ENCODE measurements at regions of chr1 and their contacts with region 1.

Region 1: GRCh38 chr1:63442141-63442475 is 74.7 kb downstream of the ALG6 start:
- DNase-seq: no peak
- ATAC-seq: peak; percentile 26; the same call in 2 of the 3 replicates
- H3K4me3 ChIP-seq: no peak overlapping the region
- H3K27ac ChIP-seq: no peak overlapping the region
- H3K4me1 ChIP-seq: no peaks in the 10 kb centered on the region
- H3K27me3 ChIP-seq: no peaks in the 10 kb centered on the region
- CTCF ChIP-seq: no peak
- EP300 ChIP-seq: no peak
- POLR2A ChIP-seq: no peak
- RAD21 ChIP-seq: no peak

Region 2: DNA sequence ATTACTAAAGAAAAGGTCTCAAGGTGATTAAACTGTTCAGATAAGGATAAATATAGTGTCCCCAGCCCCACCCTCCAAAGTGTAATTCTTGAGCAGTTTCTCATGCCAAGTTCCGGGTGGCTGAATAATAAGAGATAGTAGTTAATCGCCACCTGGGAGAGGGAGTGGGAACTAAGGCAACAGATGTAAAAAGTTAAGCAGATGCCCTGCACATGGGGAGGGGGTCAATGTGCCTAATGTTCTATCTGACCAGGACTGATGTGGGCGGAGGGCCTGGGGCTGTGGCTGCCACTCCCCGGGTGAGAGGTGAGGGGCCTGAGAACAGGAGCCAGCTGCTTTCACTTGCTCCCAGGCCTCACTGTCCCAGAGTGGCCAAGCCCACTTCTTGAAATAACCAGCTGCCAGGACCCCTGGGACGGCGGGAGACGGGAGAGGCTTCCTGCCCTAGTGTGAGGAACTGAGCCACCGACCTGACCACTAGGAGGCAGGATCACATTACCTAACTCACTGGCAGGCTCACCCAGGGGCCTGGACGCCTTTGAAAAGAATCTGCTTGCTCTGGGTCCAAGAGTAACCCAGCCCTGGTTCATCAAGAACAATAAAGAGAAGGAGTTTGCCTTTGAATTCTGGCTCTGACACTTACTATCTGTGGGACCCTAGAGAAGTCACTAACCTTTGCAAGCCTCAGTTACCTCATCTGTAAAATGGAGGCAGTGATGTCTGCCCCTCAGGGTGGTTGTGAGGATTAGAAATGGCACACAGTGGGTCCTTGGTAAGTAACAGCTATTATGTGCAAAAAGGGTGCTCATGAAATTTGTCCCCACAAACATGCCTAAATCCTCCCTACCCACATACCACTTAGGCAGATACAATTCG is 479.0 kb before region 1 on chr1:
- CTCF ChIA-PET with region 1: no interaction called
- POLR2A ChIA-PET with region 1: no interaction called
- in situ Hi-C with region 1: no loop called
- intact Hi-C with region 1: loop called (anchors 5 kb)
- DNase-seq: peak; percentile 32 to 59 (median 47)
- ATAC-seq: peak; percentile 96
- H3K4me3 ChIP-seq: no peak overlapping the region
- H3K27ac ChIP-seq: no peak overlapping the region
- H3K4me1 ChIP-seq: 0 out of 5 replicates have a peak, but pooled peaks cover 0 to 2% of the 10 kb centered on the region in 2 experiments
- H3K27me3 ChIP-seq: peaks cover 3 to 32% of the 10 kb centered on the region in 2 experiments; a peak in 3 of 5 replicates
- CTCF ChIP-seq: peak; percentile 59 to 75 (median 63)
- EP300 ChIP-seq: no peak
- POLR2A ChIP-seq: no peak
- RAD21 ChIP-seq: peak; percentile 29 to 69

Region 3: GRCh38 chr1:63316984-63317816 is 124.9 kb before region 1 on chr1:
- CTCF ChIA-PET with region 1: interaction called, 8 read pairs
- POLR2A ChIA-PET with region 1: no interaction called
- in situ Hi-C with region 1: loop called (anchors 5 kb)
- intact Hi-C with region 1: loop called (anchors 1 kb)
- DNase-seq: peak; percentile 80 to 91 (median 85)
- ATAC-seq: peak; percentile 99
- H3K4me3 ChIP-seq: peak overlapping the region; percentile 44
- H3K27ac ChIP-seq: no peak overlapping the region
- H3K4me1 ChIP-seq: peaks cover 4 to 20% of the 10 kb centered on the region in 2 experiments; a peak in 4 of 5 replicates
- H3K27me3 ChIP-seq: peaks cover 0 to 4% of the 10 kb centered on the region in 2 experiments; a peak in 1 of 5 replicates
- CTCF ChIP-seq: peak; percentile 72 to 87 (median 79)
- EP300 ChIP-seq: no peak; the same call in 1 of the 2 replicates
- POLR2A ChIP-seq: no peak
- RAD21 ChIP-seq: peak; percentile 62 to 73

Region 4: GRCh38 chr1:63327417-63328139 is 114.5 kb before region 1 on chr1:
- CTCF ChIA-PET with region 1: interaction called, 4 read pairs
- POLR2A ChIA-PET with region 1: interaction called, 3 read pairs
- in situ Hi-C with region 1: no loop called
- intact Hi-C with region 1: loop called (anchors 1 kb)
- DNase-seq: peak; percentile 76 to 80 (median 78)
- ATAC-seq: peak; percentile 86
- H3K4me3 ChIP-seq: no peak overlapping the region
- H3K27ac ChIP-seq: no peak overlapping the region
- H3K4me1 ChIP-seq: peaks cover 4 to 32% of the 10 kb centered on the region in 2 experiments; a peak in 3 of 5 replicates
- H3K27me3 ChIP-seq: peaks cover 34 to 57% of the 10 kb centered on the region in 2 experiments; a peak in 4 of 5 replicates
- CTCF ChIP-seq: peak; percentile 78 to 88 (median 80)
- EP300 ChIP-seq: peak; percentile 5; the same call in 1 of the 2 replicates
- POLR2A ChIP-seq: no peak
- RAD21 ChIP-seq: peak; percentile 37 to 65

Region 5: DNA sequence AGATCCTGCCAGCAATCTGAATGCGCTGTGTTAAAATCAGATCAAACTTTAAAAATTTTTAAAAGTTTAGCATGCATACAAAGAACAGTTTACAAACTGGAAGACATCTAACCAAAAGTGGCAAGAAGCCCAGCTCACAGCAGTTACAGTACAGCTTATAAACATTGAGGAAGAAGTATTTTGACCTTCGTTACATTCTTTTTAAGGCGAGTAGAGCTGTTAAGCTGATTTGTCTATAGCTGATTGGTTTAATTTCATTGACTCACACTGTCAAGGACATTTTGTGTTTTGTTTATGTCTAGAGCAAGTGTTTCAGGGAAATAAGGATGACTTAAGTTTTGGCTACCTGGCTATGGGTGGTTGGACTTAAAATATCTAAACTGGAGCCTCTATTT is 148.1 kb after region 1 on chr1:
- CTCF ChIA-PET with region 1: no interaction called
- POLR2A ChIA-PET with region 1: no interaction called
- in situ Hi-C with region 1: no loop called
- intact Hi-C with region 1: no loop called
- DNase-seq: no peak
- ATAC-seq: no peak
- H3K4me3 ChIP-seq: no peak overlapping the region
- H3K27ac ChIP-seq: no peak overlapping the region
- H3K4me1 ChIP-seq: peaks cover 0 to 12% of the 10 kb centered on the region in 2 experiments; a peak in 2 of 5 replicates
- H3K27me3 ChIP-seq: peaks cover 12 to 23% of the 10 kb centered on the region in 2 experiments; a peak in 4 of 5 replicates
- CTCF ChIP-seq: no peak
- EP300 ChIP-seq: no peak
- POLR2A ChIP-seq: no peak
- RAD21 ChIP-seq: no peak

Region 6: GRCh38 chr1:63611231-63611630 is 169.1 kb after region 1 on chr1:
- CTCF ChIA-PET with region 1: no interaction called
- POLR2A ChIA-PET with region 1: no interaction called
- in situ Hi-C with region 1: no loop called
- intact Hi-C with region 1: no loop called
- DNase-seq: no peak
- ATAC-seq: no peak
- H3K4me3 ChIP-seq: no peak overlapping the region
- H3K27ac ChIP-seq: no peak overlapping the region
- H3K4me1 ChIP-seq: no peaks in the 10 kb centered on the region
- H3K27me3 ChIP-seq: peaks cover 11 to 15% of the 10 kb centered on the region in 2 experiments
- CTCF ChIP-seq: no peak
- EP300 ChIP-seq: no peak
- POLR2A ChIP-seq: no peak
- RAD21 ChIP-seq: no peak

Measured in K562 (cell line).